Lower leg skin (tissue), 4 donors: ENCODE measurements at regions of chr22 and their contacts with region 1.

Region 1: DNA sequence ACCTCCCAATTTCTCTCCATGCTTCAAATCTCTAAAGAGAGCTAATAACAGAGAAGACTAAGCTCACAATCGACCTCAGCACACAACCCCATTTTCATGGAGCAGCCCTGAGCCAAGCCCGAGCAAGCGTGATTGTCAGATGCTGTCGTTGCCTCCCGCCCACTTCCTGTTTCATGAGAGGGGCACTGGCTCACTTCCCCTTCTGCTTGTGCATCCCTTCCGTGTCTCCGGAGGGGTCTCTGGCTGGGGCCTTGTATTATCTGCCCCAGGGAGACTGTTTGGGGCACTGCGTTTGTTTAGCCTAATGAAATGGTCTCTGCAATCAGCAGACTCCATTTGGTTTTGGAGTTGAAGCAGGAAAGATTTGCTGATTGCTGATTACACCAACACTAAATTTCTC is 181.3 kb upstream of the SEZ6L start:
- DNase-seq: no peak
- H3K4me3 ChIP-seq: no peak overlapping the region
- CTCF ChIP-seq: no peak
- POLR2A ChIP-seq: no peak

Region 2: DNA sequence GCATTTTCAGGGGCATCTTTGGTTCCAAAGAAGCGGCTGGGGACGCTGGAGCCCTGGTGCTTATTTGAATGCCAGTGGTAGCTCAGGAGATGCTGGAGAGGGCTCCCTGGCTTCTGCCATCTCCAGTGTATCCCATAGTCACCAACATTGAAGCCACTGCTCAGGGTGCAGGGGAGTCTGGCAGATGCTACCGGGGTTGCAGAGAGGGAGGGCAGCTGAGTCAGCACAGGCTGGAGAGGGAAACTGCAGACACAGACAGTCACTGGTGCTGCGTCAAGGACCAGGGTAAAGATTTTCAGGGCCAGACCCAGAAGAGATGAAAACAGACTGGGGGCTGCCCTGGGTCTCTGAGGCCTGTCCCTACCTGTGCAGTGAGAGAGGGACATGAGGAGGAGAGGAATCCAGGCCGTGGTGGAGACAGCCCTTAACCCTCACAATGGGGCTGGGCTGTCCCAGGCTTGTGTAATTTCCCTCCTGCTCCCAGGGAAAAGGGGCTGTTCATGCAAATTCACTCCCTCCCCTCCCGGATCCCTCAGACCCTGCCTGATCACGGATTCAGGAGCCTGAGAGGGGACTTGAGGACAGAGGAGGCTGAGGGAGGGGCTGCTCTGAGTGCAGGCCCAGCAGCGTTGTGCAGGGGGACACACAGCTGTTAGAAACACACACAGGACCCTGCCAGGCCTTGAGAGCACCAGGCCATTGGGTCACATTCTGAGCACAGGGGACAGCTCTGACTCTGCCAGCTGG is 550.4 kb before region 1 on chr22:
- intact Hi-C with region 1: loop called (anchors 5 kb)
- DNase-seq: no peak
- H3K4me3 ChIP-seq: no peak overlapping the region
- CTCF ChIP-seq: no peak
- POLR2A ChIP-seq: no peak

Region 3: GRCh38 chr22:26045051-26045450 is 57.1 kb after region 1 on chr22:
- intact Hi-C with region 1: loop called (anchors 10 kb)
- DNase-seq: no peak
- H3K4me3 ChIP-seq: no peak overlapping the region
- CTCF ChIP-seq: no peak
- POLR2A ChIP-seq: no peak